ENCODE measurements at regions of chr3 and their contacts with region 1.

Region 1: GRCh38 chr3:181709537-181710279 is 2.0 kb upstream of the SOX2 start:
- DNase-seq: peak; percentile 65 to 86
- H3K4me3 ChIP-seq: peak overlapping the region; percentile 15; the same call in 1 of the 2 replicates
- H3K4me3 Mint-ChIP-seq: peak overlapping the region; percentile 73
- H3K27ac Mint-ChIP-seq: peak overlapping the region; percentile 62
- H3K4me1 ChIP-seq: peaks cover 13% of the 10 kb centered on the region
- H3K4me1 Mint-ChIP-seq: peaks cover 8% of the 10 kb centered on the region
- H3K27me3 ChIP-seq: no peaks in the 10 kb centered on the region
- H3K27me3 Mint-ChIP-seq: no peaks in the 10 kb centered on the region
- CTCF ChIP-seq: peak; percentile 67 to 83

Region 2: DNA sequence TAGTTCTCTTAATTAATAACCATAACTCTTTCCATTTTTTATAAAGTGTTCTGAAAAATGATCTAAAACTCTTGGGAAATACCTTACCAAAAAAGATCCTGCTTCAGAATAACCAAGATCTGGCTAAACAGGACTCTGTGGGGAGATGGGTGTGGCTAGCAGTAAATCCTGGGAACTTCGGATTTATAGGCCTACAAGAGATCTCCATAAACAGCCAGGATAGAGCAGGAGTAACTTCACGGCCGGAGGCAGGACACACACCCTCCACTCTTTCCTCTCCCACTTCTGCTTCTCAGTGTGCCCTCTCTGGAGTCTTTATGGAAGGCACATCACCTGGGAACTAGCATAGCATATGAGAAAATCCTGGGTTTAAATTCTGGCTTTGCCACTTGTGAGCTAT is 307.4 kb before region 1 on chr3:
- CTCF ChIA-PET with region 1: no interaction called
- POLR2A ChIA-PET with region 1: no interaction called
- intact Hi-C with region 1: no loop called
- DNase-seq: no peak
- H3K4me3 ChIP-seq: no peak overlapping the region
- H3K4me3 Mint-ChIP-seq: no peak overlapping the region
- H3K27ac Mint-ChIP-seq: no peak overlapping the region
- H3K4me1 ChIP-seq: no peaks in the 10 kb centered on the region
- H3K4me1 Mint-ChIP-seq: no peaks in the 10 kb centered on the region
- H3K27me3 ChIP-seq: no peaks in the 10 kb centered on the region
- H3K27me3 Mint-ChIP-seq: peaks cover 7% of the 10 kb centered on the region
- CTCF ChIP-seq: no peak

Region 3: GRCh38 chr3:181839039-181839915 is 129.6 kb after region 1 on chr3:
- CTCF ChIA-PET with region 1: no interaction called
- POLR2A ChIA-PET with region 1: no interaction called
- intact Hi-C with region 1: loop called (anchors 1 kb)
- DNase-seq: peak; percentile 26 to 42
- H3K4me3 ChIP-seq: no peak overlapping the region
- H3K4me3 Mint-ChIP-seq: peak overlapping the region; percentile 12
- H3K27ac Mint-ChIP-seq: no peak overlapping the region
- H3K4me1 ChIP-seq: peaks cover 10% of the 10 kb centered on the region; the same call in 1 of the 2 replicates
- H3K4me1 Mint-ChIP-seq: peaks cover 12% of the 10 kb centered on the region
- H3K27me3 ChIP-seq: no peaks in the 10 kb centered on the region
- H3K27me3 Mint-ChIP-seq: no peaks in the 10 kb centered on the region
- CTCF ChIP-seq: peak in 1 of 2 experiments; percentile 13

Region 4: DNA sequence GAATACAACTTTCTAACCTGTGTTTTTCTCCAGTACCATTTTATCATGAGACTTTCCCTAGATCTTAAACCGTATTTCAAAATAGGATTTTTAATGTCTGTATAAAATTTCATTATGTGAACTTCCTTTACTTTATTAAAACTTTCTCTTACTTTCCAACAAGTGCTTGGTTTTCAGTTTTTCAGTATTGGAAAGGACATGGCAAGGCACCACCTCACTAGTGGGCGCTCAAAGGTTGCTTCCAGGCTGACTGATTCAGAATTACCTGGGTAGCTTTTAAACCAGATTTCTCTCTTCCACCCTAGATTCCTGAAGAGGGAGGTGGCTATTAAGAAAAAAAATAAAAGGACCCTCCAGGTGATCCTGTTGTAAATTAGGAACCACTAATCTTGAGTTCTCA is 238.6 kb after region 1 on chr3:
- CTCF ChIA-PET with region 1: no interaction called
- POLR2A ChIA-PET with region 1: no interaction called
- intact Hi-C with region 1: loop called (anchors 2 kb)
- DNase-seq: peak in 1 of 2 experiments; percentile 25
- H3K4me3 ChIP-seq: no peak overlapping the region
- H3K4me3 Mint-ChIP-seq: no peak overlapping the region
- H3K27ac Mint-ChIP-seq: no peak overlapping the region
- H3K4me1 ChIP-seq: peaks cover 8% of the 10 kb centered on the region
- H3K4me1 Mint-ChIP-seq: peaks cover 10% of the 10 kb centered on the region
- H3K27me3 ChIP-seq: no peaks in the 10 kb centered on the region
- H3K27me3 Mint-ChIP-seq: no peaks in the 10 kb centered on the region
- CTCF ChIP-seq: peak in 1 of 2 experiments; percentile 34

Region 5: DNA sequence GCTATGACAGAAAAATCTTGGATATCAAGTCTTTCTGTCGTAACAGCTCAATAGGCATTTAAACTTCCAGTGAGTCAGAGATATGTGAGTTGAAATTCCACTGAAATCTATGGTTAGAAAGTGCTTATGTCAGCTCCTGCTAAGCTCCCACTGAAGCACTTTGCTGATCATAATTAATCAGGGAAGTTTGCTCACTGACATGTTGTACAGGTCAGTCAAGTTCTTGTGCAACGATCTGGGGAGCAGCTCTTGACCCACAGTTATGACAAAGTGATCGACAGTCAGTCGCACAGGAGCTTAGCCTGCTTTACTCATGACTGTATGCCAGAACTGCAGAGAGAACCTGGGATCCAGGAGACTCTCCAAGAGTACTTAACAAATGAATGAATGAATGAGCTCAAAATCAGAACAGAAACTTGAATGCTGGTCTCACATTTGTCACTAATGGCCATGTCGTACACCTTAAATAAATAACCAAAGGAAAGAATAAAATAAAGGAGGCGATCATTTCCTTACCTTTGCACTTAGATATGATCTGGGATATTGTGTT is 455.6 kb after region 1 on chr3:
- CTCF ChIA-PET with region 1: interaction called, 3 read pairs
- POLR2A ChIA-PET with region 1: no interaction called
- intact Hi-C with region 1: loop called (anchors 5 kb)
- DNase-seq: peak; percentile 73 to 83
- H3K4me3 ChIP-seq: no peak overlapping the region
- H3K4me3 Mint-ChIP-seq: peak overlapping the region; percentile 36
- H3K27ac Mint-ChIP-seq: peak overlapping the region; percentile 84
- H3K4me1 ChIP-seq: peaks cover 13% of the 10 kb centered on the region
- H3K4me1 Mint-ChIP-seq: peaks cover 14% of the 10 kb centered on the region
- H3K27me3 ChIP-seq: no peaks in the 10 kb centered on the region
- H3K27me3 Mint-ChIP-seq: no peaks in the 10 kb centered on the region
- CTCF ChIP-seq: no peak

Region 6: DNA sequence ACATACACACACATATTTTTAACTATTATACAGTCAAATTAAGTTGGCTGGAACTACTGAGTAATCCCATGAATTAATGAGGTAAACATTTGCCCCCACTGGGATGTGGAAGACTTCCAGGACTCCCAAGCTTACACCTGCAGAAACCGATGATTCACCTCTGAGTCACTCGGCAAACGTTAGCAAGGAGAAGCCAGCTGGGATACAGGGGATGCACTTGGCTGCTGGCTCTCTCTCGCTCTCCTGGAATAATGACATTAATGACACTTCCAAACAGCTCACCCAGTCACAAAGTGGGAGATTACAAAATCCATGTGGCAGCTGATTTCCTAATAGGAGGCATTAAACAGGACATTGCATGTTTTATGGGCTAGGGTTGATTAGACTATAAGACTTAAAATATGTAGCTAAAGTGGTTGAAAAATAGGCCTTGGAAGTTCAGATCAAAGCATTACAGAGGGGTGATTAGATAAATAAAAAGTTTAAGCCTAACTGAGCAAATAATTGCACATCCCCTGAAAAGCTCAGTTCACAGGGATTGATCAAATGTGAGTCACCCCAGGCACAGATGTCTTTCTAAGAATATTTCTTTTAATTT is 502.9 kb after region 1 on chr3:
- CTCF ChIA-PET with region 1: no interaction called
- POLR2A ChIA-PET with region 1: no interaction called
- intact Hi-C with region 1: loop called (anchors 1 kb)
- DNase-seq: peak; percentile 89 to 93
- H3K4me3 ChIP-seq: no peak overlapping the region
- H3K4me3 Mint-ChIP-seq: no peak overlapping the region
- H3K27ac Mint-ChIP-seq: peak overlapping the region; percentile 75
- H3K4me1 ChIP-seq: peaks cover 43% of the 10 kb centered on the region
- H3K4me1 Mint-ChIP-seq: peaks cover 37% of the 10 kb centered on the region
- H3K27me3 ChIP-seq: no peaks in the 10 kb centered on the region
- H3K27me3 Mint-ChIP-seq: no peaks in the 10 kb centered on the region
- CTCF ChIP-seq: no peak

Region 7: DNA sequence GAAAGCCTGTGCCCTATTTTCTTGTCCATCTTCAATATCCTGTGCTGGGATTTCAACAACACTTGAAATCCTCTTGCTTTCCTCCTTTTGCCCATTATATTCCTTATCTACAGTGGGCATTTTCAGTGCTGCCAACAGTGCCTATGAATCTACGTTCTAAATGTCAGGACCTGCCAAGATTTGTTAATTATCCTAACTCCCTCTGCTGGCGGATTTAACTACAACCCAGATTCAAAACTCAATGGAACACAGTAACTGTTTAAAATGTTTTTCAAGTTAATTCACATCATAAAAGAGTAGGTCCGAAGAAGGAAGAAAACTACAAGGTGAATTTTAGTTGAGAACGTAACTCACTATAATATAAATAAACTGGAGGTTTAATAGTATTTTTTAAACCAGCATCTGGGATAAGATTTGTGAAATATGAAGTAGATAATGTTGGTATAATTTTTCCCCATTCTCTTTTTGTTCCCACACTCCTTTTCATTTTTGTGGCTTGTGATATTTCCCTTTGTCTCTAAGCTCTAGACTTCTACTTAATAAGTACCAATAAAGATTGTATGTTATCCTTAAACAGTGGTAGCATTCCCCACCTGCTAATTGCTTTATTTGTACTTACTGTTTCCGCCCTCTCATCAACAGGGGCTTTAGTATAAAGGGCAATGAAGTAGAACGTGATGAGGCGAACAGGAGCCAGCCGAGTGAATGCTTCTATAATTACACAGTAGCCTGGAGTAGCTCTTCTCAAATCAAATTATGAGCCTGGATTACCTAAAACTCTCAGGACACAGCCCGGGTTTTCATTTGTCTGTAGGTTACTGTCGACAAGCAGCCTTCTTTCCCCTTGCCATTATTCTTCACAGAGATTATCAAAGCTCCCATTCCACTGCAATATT is 781.1 kb after region 1 on chr3:
- CTCF ChIA-PET with region 1: no interaction called
- POLR2A ChIA-PET with region 1: no interaction called
- intact Hi-C with region 1: loop called (anchors 2 kb)
- DNase-seq: peak in 1 of 2 experiments; percentile 22
- H3K4me3 ChIP-seq: no peak overlapping the region
- H3K4me3 Mint-ChIP-seq: no peak overlapping the region
- H3K27ac Mint-ChIP-seq: no peak overlapping the region
- H3K4me1 ChIP-seq: no peaks in the 10 kb centered on the region
- H3K4me1 Mint-ChIP-seq: no peaks in the 10 kb centered on the region
- H3K27me3 ChIP-seq: no peaks in the 10 kb centered on the region
- H3K27me3 Mint-ChIP-seq: no peaks in the 10 kb centered on the region
- CTCF ChIP-seq: peak; percentile 25 to 39

Region 8: DNA sequence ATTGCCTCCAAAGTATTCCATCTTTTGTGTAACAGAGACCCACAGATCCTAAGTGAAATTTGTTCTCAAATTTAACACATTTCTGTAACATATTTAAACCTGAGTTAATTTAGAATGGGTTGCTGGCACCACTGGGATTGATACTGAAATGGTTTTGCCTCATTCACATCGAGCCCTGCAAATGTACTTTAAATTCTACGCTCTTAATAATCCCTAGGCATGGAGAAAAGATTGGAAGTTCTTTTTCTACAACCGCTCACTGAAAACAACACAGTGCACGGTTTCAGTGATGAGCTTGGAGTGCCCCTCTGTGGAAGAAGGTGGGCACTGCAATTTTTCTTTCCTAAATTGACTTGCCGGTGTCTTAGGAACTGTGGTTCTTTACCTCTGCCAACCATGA is 973.7 kb after region 1 on chr3:
- CTCF ChIA-PET with region 1: no interaction called
- POLR2A ChIA-PET with region 1: no interaction called
- intact Hi-C with region 1: loop called (anchors 1 kb)
- DNase-seq: peak; percentile 49 to 74
- H3K4me3 ChIP-seq: no peak overlapping the region
- H3K4me3 Mint-ChIP-seq: peak overlapping the region; percentile 74
- H3K27ac Mint-ChIP-seq: no peak overlapping the region
- H3K4me1 ChIP-seq: peaks cover 12% of the 10 kb centered on the region; the same call in 1 of the 2 replicates
- H3K4me1 Mint-ChIP-seq: peaks cover 27% of the 10 kb centered on the region
- H3K27me3 ChIP-seq: no peaks in the 10 kb centered on the region
- H3K27me3 Mint-ChIP-seq: peaks cover 3% of the 10 kb centered on the region
- CTCF ChIP-seq: peak; percentile 71 to 83